Activated CD4-positive, alpha-beta memory T cell treated with anti-CD3 and anti-CD28 coated beads for 36 hours (primary cell): ENCODE measurements at regions of chr11 and their contacts with region 1.

Region 1: GRCh38 chr11:68412593-68413475 is 47.7 kb upstream of the PPP6R3 start:
- DNase-seq: peak; percentile 75
- H3K4me3 Mint-ChIP-seq: no peak overlapping the region
- H3K27ac Mint-ChIP-seq: no peak overlapping the region
- H3K4me1 Mint-ChIP-seq: peaks cover 9% of the 10 kb centered on the region
- H3K27me3 Mint-ChIP-seq: no peaks in the 10 kb centered on the region

Region 2: DNA sequence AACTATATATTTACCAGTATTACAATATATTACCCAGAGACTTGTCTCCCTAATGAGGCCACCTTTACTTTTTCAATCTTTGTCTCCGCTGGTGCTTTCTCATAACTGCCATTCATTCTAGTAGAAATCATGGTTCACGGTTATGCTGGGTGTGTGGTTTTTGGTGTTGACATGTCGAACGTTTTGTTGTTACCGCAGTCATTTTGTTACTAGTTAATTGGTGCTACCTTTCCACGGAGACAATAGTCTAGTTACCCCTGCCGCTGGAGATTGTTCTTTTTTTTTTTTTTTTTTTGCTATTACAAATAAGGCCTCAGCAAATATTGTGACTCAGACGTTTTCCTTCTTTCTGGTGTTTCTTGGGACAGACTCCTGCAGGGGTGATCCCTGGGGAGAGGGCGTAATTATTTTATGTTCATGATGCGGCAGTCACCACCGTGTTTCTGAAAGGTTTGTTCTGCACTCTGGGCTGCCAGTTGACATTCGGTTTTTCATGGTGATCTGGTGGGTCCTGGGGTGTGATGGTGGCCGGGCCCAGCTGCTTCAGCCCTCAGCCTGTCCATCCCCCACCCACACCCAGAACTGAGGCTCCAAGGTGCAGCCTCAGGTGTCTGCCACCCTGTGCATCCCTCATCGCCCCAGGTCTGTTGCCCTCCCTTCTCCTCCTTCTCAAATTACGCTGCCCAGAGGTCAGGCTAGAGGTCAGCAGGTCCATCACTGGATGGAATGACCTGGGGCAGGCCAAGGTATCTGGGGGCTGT is 71.9 kb before region 1 on chr11:
- CTCF ChIA-PET with region 1: no interaction called
- POLR2A ChIA-PET with region 1: no interaction called
- intact Hi-C with region 1: loop called (anchors 2 kb)
- DNase-seq: peak; percentile 36
- H3K4me3 Mint-ChIP-seq: no peak overlapping the region
- H3K27ac Mint-ChIP-seq: peak overlapping the region; percentile 26
- H3K4me1 Mint-ChIP-seq: peaks cover 38% of the 10 kb centered on the region
- H3K27me3 Mint-ChIP-seq: no peaks in the 10 kb centered on the region

Region 3: DNA sequence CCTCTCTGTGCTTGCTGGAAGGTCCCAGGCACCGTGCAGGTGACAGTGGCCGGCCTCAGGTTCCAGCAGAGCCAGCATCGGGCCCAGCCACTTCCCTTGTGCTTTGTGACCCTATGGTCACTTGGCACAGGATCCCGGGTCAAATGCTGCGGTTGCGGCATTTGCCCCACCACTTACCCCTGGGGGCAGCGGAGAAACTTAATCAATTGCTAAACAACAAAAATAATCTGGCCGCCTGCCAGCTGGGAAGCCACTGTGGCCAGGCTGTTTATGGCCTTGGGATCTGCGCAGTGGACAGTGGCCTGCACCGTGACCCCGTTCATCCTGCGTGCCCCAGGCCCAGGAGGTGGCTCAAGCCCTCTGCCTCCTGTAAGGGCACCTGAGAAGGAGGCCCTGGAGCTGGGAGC is 35.4 kb before region 1 on chr11:
- CTCF ChIA-PET with region 1: no interaction called
- POLR2A ChIA-PET with region 1: no interaction called
- intact Hi-C with region 1: no loop called
- DNase-seq: no peak
- H3K4me3 Mint-ChIP-seq: no peak overlapping the region
- H3K27ac Mint-ChIP-seq: no peak overlapping the region
- H3K4me1 Mint-ChIP-seq: peaks cover 9% of the 10 kb centered on the region
- H3K27me3 Mint-ChIP-seq: peaks cover 14% of the 10 kb centered on the region